Common myeloid progenitor, CD34-positive (primary cell): ENCODE measurements at regions of chr12 and their contacts with region 1.

Region 1: DNA sequence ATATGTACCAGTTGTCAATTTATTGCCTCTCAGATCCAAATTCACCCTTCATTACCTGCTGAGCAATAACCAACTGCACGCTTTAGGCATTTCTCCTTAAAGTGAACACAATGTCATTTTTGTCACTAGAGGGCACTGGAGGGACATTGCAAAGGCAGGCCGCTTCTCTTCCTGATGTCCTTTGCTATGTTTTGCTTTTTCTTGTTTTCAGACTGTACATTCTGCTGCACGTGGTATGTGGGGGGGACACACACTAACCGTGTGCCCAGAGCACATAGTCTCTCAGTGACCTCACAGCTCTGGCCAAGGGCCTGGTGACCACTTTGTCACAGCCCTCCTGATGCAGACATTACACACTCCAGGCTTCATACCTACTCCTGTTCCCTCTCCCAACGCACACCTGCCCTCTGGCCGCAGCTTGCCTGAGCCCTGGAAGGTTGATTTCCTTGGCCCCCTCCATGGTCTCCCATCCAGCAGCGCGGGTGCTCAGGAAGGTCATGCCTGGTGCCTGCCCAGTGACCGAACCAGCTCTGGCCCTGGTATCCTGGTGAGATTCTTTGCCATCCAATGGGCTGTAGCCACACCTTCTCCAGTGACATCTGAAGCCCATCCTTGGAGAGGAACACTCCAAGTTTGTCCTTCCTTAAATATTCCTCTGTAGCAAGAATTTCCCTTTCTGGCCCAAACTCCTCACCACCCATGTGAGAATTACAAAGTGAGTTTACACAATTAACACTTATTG is 39.9 kb downstream of the MYO1H start:
- DNase-seq: peak; percentile 48 to 67 (median 66)
- H3K4me3 ChIP-seq: no peak overlapping the region
- H3K27ac ChIP-seq: no peak overlapping the region
- H3K4me1 ChIP-seq: no peaks in the 10 kb centered on the region
- H3K27me3 ChIP-seq: peaks cover 0 to 3% (median 0%) of the 10 kb centered on the region in 5 experiments

Region 2: DNA sequence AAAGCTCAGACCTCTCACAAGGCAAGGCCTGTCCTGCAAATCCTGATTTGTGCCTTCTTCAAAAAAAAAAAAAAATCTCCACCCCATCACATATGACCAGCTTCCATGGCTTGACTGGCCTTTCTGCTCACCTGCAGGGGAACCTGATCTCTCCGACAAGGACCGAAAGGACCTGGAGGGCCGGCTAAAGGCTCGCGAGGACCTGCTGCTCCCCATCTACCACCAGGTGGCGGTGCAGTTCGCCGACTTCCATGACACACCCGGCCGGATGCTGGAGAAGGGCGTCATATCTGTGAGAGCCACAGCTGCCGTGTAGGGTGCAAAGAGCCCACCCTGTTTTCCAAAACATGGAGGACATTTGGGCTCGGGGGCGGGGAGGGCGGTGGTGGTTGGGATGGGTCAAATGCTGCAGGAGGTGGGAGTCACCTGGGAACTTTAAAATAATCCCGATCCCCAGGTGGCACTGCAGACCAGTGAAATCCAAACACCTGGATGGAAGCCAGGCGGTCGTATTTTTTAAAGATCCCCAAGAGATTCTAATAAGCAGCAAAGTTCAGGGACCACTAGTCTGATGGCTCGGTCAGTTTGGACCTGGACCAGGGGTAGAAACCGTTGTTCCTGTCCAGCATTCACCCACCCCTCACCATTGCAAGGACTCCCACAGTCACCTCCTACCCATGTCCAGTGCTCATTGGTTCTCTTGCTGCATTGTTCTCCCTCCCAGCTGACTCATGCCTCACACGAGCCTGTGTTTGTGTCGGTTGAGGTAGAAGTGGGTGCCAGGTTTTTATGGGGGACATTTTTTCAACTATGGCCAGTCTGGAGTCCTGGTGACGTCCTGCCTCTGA is 123.3 kb before region 1 on chr12:
- CTCF ChIA-PET with region 1: interaction called, 12 read pairs
- POLR2A ChIA-PET with region 1: no interaction called
- DNase-seq: peak; percentile 40 to 61 (median 59)
- H3K4me3 ChIP-seq: no peak overlapping the region
- H3K27ac ChIP-seq: no peak overlapping the region
- H3K4me1 ChIP-seq: no peaks in the 10 kb centered on the region
- H3K27me3 ChIP-seq: no peaks in the 10 kb centered on the region

Region 3: DNA sequence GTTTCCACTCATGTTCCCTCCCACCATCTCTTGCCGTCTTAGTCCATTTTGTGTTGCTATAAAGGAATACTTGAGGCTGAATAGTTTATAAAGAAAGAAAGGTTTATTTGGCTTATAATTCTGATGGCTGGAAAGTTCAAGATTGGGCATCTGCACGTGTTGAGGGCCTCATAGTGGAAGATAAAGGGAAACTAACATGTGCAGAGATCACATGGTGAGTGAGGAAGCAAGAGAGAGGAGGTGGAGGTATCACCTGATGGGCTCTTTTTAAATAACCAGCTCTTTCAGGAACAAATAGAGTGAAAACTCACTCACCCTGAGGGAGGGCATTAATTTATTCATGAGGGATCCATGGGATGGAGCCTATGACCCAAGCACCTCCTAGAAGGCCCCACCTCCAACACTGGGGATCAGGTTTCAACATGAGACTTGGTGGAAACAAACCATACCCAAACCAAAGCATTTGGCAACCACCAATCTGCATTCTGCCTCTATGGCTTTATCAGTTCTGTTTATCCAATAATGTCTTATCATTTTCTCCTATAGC is 10.4 kb before region 1 on chr12:
- CTCF ChIA-PET with region 1: interaction called, 17 read pairs
- POLR2A ChIA-PET with region 1: no interaction called
- DNase-seq: no peak
- H3K4me3 ChIP-seq: no peak overlapping the region
- H3K27ac ChIP-seq: no peak overlapping the region
- H3K4me1 ChIP-seq: peaks cover 5 to 10% (median 8%) of the 10 kb centered on the region in 4 experiments
- H3K27me3 ChIP-seq: no peaks in the 10 kb centered on the region

Region 4: DNA sequence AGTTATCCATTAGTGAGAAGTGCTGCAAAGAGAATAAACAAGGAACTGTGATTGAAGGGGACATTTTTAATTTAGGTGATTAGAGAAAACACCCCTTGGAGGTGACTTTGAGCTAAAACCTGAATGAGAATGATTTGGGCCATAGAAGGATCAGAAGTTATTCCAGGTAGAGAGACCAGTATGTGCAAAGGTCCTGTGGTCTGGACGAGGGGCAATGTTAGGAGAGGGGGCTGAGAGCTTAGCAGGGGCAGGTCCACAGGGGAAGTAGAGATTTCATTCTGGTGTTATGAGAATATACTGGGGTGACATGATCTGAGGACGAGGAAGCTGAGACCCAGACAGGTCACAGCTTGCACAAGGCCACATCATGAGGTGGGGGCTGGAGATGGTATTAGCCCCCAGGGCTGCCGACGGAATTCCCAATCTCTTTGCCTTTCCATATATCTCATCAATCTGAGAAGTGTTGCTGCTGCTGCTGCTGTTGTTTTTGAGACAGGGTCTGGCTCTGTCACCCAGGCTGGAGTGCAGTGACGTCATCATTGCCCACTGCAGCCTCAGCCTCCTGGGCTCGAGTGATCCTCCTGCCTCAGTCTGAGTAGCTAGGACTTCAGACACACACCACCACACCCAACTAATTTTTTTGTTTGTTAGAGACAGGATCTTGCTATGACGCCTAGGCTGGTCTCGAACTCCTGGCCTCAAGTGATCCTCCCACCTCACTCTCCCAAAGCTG is 33.9 kb after region 1 on chr12:
- CTCF ChIA-PET with region 1: no interaction called
- POLR2A ChIA-PET with region 1: no interaction called
- DNase-seq: no peak
- H3K4me3 ChIP-seq: no peak overlapping the region
- H3K27ac ChIP-seq: no peak overlapping the region
- H3K4me1 ChIP-seq: no peaks in the 10 kb centered on the region
- H3K27me3 ChIP-seq: peaks cover 0 to 12% (median 0%) of the 10 kb centered on the region in 5 experiments